ENCODE measurements at regions of chr3 and their contacts with region 1.

Region 1: GRCh38 chr3:81760924-81761903 is at the start of gene GBE1:
- DNase-seq: peak; percentile 87
- ATAC-seq: peak; percentile 93
- H3K4me3 ChIP-seq: peak within 1 kb of the TSS; percentile 77 to 83 (median 79)
- H3K27ac ChIP-seq: peak within 1 kb of the TSS; percentile 97
- H3K4me1 ChIP-seq: peaks cover 65% of the 10 kb centered on the region
- H3K27me3 ChIP-seq: no peaks in the 10 kb centered on the region
- CTCF ChIP-seq: peak; percentile 38
- EP300 ChIP-seq: peak in 1 of 2 experiments; percentile 69; a peak in 2 of 4 replicates
- POLR2A ChIP-seq: peak; percentile 87 to 91
- RAD21 ChIP-seq: peak; percentile 60
- total RNA-seq, gene GBE1: 22.9 and 30.9 TPM in 2 replicates

Region 2: DNA sequence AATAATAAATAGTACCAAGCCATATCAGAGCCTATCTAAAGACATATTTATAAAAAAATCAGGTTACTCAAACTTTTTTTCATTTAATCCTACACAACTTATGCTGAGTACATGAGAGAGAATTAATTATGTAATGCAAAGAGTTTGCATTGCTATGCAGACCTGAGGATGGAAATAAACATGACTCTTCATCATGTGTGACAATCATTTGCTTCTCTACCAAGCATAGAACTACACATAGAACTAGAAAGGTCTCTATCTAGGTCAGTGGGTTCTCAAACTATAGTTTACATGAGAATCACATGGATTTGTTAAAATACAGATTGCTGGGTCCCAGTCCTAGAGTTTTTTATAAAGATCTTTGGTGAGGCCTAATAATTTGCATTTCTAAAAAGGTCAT is 86.5 kb before region 1 on chr3:
- CTCF ChIA-PET with region 1: no interaction called
- POLR2A ChIA-PET with region 1: no interaction called
- in situ Hi-C with region 1: no loop called
- intact Hi-C with region 1: loop called (anchors 5 kb)
- DNase-seq: no peak
- ATAC-seq: no peak
- H3K4me3 ChIP-seq: no peak overlapping the region
- H3K27ac ChIP-seq: no peak overlapping the region
- H3K4me1 ChIP-seq: peaks cover 13% of the 10 kb centered on the region
- H3K27me3 ChIP-seq: no peaks in the 10 kb centered on the region
- CTCF ChIP-seq: no peak
- EP300 ChIP-seq: no peak
- POLR2A ChIP-seq: no peak
- RAD21 ChIP-seq: no peak

Region 3: DNA sequence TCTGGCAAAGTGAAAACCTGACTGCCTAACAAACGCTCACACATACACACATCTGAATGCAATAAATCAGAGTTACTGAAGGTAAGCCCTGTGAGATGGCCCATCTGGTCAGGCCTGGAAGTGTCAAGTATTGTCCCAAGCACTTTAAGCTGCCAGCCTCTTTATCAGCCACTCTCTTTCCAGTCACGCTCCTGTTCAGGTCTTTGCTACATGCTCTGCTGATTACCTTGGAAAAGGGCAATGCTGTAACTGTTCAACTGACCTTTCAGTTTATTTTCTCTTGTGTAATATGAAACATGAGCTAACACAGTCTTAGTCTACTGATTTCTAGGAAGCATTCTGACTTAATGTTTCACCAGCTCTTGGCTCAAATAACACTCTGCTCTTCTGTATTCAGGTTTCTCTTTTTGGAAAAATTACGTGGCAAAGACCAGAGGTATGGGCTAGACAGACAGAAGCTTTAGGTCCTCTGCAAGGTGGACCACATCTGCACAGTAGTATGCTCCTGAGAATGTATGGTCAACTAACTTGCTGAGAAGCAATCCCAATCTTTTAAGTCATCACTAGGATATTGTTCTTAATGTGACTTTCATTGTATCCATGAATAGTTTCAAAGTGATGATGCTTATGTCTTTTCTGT is 44.2 kb before region 1 on chr3:
- CTCF ChIA-PET with region 1: no interaction called
- POLR2A ChIA-PET with region 1: interaction called, 6 read pairs
- in situ Hi-C with region 1: no loop called
- intact Hi-C with region 1: loop called (anchors 5 kb)
- DNase-seq: peak; percentile 86
- ATAC-seq: peak; percentile 99
- H3K4me3 ChIP-seq: peak overlapping the region in 2 of 3 experiments; percentile 19 to 27; a peak in 2 of 6 replicates
- H3K27ac ChIP-seq: peak overlapping the region; percentile 43
- H3K4me1 ChIP-seq: peaks cover 29% of the 10 kb centered on the region
- H3K27me3 ChIP-seq: no peaks in the 10 kb centered on the region
- CTCF ChIP-seq: 0 out of 2 replicates have a peak, but pooled peaks have one; percentile 7
- EP300 ChIP-seq: peak; percentile 47 to 86; a peak in 3 of 4 replicates
- POLR2A ChIP-seq: no peak
- RAD21 ChIP-seq: no peak

Region 4: DNA sequence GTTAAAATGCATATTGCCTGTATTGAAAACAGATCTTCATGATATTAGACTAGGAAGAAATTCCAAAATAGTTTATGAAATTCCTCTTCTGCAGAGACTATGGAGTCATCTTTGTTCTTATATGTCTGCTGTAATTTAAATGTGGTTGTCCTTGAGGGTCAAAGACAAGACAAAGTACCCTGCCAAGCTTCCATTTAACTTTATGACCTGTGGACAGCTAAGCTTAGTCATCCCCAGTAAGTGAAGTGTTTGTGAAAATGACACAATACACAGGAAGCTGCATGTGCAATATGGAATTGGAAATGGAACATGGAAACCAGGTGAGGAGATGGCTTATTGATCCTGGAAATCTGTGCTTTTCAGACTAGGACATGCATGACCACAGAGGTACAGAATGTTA is 68.7 kb after region 1 on chr3:
- CTCF ChIA-PET with region 1: no interaction called
- POLR2A ChIA-PET with region 1: no interaction called
- in situ Hi-C with region 1: no loop called
- intact Hi-C with region 1: loop called (anchors 5 kb)
- DNase-seq: no peak
- ATAC-seq: no peak
- H3K4me3 ChIP-seq: no peak overlapping the region
- H3K27ac ChIP-seq: no peak overlapping the region
- H3K4me1 ChIP-seq: no peaks in the 10 kb centered on the region
- H3K27me3 ChIP-seq: no peaks in the 10 kb centered on the region
- CTCF ChIP-seq: no peak
- EP300 ChIP-seq: no peak
- POLR2A ChIP-seq: no peak
- RAD21 ChIP-seq: no peak